ENCODE measurements at regions of chr12 and their contacts with region 1.

Region 1: DNA sequence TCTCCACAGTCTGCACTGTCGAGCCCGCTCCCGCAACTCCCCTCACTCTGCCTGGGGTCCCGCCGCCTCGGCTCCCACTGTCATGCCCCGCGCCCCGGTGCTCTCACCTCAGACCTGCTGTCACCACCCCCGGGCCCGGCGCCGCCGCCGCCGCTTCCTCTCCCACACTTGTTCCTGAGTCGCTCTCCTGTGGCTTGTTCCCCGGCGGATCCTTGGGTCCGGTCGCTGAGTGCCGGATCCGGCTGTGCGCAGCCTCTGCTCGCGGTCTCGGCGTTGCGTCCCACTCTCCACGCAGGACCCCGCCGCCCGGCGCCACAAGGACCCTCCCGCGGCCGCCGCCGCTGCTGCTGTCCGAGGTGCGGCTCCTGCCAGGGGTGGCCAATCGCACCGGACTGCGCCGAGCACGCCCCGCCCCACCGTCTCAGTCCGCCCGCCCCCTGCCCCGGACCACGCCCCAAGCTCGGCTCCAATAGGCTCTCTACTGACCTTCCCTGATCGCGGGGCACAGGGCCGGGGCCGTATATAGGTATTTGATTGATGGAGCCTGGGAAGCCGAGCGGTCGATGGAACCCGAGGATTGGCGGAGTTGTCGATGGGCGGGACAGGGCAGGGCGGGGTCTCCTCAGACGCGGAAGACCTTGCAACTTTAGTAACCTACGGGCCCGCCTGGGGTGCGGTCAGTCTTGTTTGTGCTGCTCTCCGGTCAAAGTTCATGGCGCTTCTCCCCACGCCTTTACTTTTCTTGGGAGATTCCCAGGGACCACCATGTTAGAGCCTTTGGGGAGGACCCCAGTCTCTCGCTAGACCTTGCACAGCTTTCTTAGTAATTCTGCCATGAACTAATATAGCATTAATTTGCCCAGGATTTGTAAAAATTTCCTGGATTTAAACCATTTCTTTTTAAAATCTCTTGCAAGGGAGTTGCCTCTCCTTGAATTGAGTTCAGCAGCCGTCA is at the start of gene TAOK3:
- DNase-seq: peak; percentile 96 to 98 (median 97)
- H3K4me3 ChIP-seq: peak within 1 kb of the TSS; percentile 81 to 87
- H3K4me3 Mint-ChIP-seq: peak within 1 kb of the TSS; percentile 89 to 93 (median 92)
- H3K27ac ChIP-seq: peak within 1 kb of the TSS; percentile 68
- H3K27ac Mint-ChIP-seq: peak within 1 kb of the TSS; percentile 93 to 100 (median 96)
- H3K4me1 ChIP-seq: peaks cover 46% of the 10 kb centered on the region
- H3K4me1 Mint-ChIP-seq: peaks cover 25 to 68% (median 45%) of the 10 kb centered on the region in 4 donors
- H3K27me3 ChIP-seq: no peaks in the 10 kb centered on the region
- H3K27me3 Mint-ChIP-seq: no peaks in the 10 kb centered on the region
- total RNA-seq, gene TAOK3: 74.8 to 76.0 TPM

Region 2: DNA sequence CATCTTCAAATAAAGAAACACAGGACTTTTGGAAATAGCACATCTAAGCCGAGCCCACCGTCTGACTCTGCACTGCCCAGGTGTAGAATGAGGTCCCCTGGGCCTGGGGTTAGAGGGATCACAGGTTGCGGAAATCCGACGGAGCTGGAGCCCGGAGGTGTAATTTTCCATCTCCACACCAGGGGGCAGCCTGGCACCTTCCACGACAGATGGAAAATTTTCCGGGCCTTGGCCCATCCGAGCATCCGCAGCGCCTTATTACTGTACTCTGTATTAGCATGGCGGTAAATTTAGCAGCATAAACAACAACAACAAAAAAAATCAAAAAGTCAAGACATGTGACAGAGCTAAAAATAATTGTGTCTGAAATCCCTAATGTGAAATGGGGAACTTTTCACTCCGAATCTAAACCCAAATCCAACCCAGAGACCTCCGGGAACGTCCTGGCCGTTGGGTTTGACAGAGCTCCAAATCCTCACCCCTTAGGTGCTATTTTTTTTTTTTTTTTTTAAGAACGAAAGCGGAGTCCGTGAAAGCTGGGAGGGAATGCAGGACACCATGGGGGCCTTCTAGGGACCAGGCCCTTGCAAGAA is 497.9 kb before region 1 on chr12:
- CTCF ChIA-PET with region 1: interaction called, 23 read pairs
- POLR2A ChIA-PET with region 1: interaction called, 3 read pairs
- intact Hi-C with region 1: loop called (anchors 2 kb)
- DNase-seq: peak; percentile 50 to 67 (median 62)
- H3K4me3 ChIP-seq: no peak overlapping the region
- H3K4me3 Mint-ChIP-seq: peak overlapping the region in 7 of 8 donors; percentile 27 to 77 (median 54)
- H3K27ac ChIP-seq: peak overlapping the region; percentile 21
- H3K27ac Mint-ChIP-seq: peak overlapping the region in 6 of 7 donors; percentile 59 to 93 (median 86)
- H3K4me1 ChIP-seq: peaks cover 6% of the 10 kb centered on the region
- H3K4me1 Mint-ChIP-seq: peaks cover 6 to 14% (median 10%) of the 10 kb centered on the region in 4 donors
- H3K27me3 ChIP-seq: no peaks in the 10 kb centered on the region
- H3K27me3 Mint-ChIP-seq: peaks cover 3 to 13% of the 10 kb centered on the region in 2 donors

Region 3: DNA sequence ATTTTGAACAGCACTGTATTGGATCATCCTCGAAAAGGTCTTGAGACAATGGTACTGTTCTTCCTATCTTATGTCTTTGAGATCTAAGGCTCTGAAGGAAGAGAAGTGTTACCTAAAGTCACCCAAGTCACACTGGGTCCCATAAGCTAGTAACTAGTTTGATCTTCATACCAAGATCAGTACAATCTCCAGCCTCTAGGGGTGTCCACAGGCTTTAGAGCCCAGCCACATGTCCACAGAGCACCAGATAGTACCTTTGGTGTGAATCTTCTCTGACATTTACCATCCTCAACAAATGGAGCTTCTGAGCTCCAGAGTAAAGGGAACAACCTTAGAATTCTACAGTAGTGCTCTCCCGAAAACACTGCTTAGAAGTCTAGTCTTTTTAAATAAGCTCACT is 482.7 kb before region 1 on chr12:
- CTCF ChIA-PET with region 1: no interaction called
- POLR2A ChIA-PET with region 1: no interaction called
- intact Hi-C with region 1: no loop called
- DNase-seq: no peak
- H3K4me3 ChIP-seq: no peak overlapping the region
- H3K4me3 Mint-ChIP-seq: no peak overlapping the region
- H3K27ac ChIP-seq: no peak overlapping the region
- H3K27ac Mint-ChIP-seq: peak overlapping the region in 1 of 7 donors; percentile 17
- H3K4me1 ChIP-seq: no peaks in the 10 kb centered on the region
- H3K4me1 Mint-ChIP-seq: no peaks in the 10 kb centered on the region
- H3K27me3 ChIP-seq: no peaks in the 10 kb centered on the region
- H3K27me3 Mint-ChIP-seq: peaks cover 1 to 11% of the 10 kb centered on the region in 2 donors

Region 4: DNA sequence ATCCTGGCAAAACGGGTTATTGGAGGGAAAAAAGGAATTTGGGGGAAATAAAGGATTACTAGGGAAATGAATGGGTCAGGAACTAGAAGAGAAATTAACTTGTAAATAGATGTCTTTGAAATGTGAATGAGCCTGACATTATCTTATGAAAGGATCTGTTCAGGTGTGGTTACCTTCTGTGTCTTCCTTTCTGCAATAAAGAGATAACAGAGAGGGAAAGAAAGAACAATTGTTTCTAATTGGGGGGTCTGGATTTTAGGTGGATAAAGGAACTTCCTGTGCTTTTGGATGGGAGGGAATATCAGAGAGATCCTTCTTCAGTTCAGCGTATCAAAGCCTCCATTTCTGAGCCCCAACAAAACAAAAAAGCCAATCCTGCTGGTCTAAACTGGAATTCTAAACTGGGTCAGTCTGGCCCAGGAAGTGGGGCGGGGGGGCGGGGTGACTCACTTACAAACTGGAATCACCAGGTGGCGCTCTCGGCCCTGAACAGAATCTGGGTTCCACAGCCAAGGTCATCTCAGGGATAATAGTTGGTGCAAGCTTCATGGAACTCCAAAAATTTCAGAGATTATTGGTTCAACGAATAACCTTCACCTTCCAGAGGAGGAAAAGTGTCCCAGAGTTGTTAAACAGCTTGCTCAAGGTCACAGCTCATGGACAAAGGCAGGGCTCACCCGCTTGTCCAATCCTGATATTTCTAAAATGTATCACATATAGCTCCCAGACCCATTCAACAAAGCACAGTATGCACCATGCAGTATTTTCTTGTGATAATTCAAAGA is 252.0 kb before region 1 on chr12:
- CTCF ChIA-PET with region 1: interaction called, 55 read pairs
- POLR2A ChIA-PET with region 1: interaction called, 17 read pairs
- intact Hi-C with region 1: loop called (anchors 1 kb)
- DNase-seq: peak; percentile 47 to 68 (median 59)
- H3K4me3 ChIP-seq: no peak overlapping the region
- H3K4me3 Mint-ChIP-seq: peak overlapping the region in 6 of 8 donors; percentile 5 to 70 (median 20)
- H3K27ac ChIP-seq: peak overlapping the region; percentile 47
- H3K27ac Mint-ChIP-seq: peak overlapping the region; percentile 76 to 96 (median 86)
- H3K4me1 ChIP-seq: peaks cover 10% of the 10 kb centered on the region
- H3K4me1 Mint-ChIP-seq: peaks cover 6 to 17% (median 11%) of the 10 kb centered on the region in 4 donors
- H3K27me3 ChIP-seq: no peaks in the 10 kb centered on the region
- H3K27me3 Mint-ChIP-seq: no peaks in the 10 kb centered on the region

Region 5: GRCh38 chr12:118183705-118184104 is 189.1 kb before region 1 on chr12:
- CTCF ChIA-PET with region 1: interaction called, 90 read pairs
- POLR2A ChIA-PET with region 1: interaction called, 25 read pairs
- intact Hi-C with region 1: loop called (anchors 1 kb)
- DNase-seq: no peak
- H3K4me3 ChIP-seq: no peak overlapping the region
- H3K4me3 Mint-ChIP-seq: no peak overlapping the region
- H3K27ac ChIP-seq: no peak overlapping the region
- H3K27ac Mint-ChIP-seq: no peak overlapping the region
- H3K4me1 ChIP-seq: peaks cover 4% of the 10 kb centered on the region
- H3K4me1 Mint-ChIP-seq: peaks cover 12 to 23% (median 14%) of the 10 kb centered on the region in 4 donors
- H3K27me3 ChIP-seq: no peaks in the 10 kb centered on the region
- H3K27me3 Mint-ChIP-seq: no peaks in the 10 kb centered on the region

Region 6: DNA sequence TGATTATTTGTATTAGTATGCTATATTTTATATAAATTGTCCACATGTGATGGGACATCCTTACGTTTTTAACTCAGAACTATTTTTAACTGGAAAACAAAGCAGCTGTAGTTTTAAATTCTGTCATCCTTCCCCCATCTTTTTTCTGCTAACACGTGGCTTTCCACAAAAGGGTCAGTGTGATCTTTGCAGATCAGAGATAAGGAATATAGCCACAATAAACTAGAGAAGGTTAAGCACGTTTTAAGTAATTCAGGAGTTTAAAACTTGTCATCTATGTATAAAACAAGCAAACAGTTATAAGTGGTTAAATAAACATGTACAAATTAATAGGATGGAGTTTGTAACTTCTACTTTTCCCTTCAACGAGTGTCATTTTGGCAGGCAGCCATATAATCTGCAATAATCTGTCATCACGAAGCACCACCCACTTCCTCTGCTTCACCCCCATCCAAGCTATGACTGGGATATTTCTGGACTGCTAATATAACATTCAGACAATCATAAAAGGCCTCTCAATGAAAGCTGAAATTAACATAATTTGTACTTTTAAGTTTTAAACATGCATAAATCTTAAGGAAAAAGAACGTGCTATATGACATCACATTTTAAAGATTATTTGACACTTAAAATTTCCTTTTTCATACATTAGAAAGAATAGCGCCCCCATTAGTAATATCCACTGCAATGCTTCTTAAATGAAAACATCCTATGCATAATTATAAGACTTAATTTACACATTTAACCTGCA is 15.4 kb before region 1 on chr12:
- CTCF ChIA-PET with region 1: interaction called, 119 read pairs
- POLR2A ChIA-PET with region 1: interaction called, 61 read pairs
- intact Hi-C with region 1: loop called (anchors 1 kb)
- DNase-seq: peak; percentile 60 to 78 (median 64)
- H3K4me3 ChIP-seq: peak overlapping the region; percentile 15 to 56
- H3K4me3 Mint-ChIP-seq: peak overlapping the region; percentile 63 to 94 (median 82)
- H3K27ac ChIP-seq: peak overlapping the region; percentile 28
- H3K27ac Mint-ChIP-seq: peak overlapping the region; percentile 74 to 93 (median 86)
- H3K4me1 ChIP-seq: peaks cover 41% of the 10 kb centered on the region
- H3K4me1 Mint-ChIP-seq: peaks cover 29 to 67% (median 49%) of the 10 kb centered on the region in 4 donors
- H3K27me3 ChIP-seq: no peaks in the 10 kb centered on the region
- H3K27me3 Mint-ChIP-seq: no peaks in the 10 kb centered on the region

Region 7: DNA sequence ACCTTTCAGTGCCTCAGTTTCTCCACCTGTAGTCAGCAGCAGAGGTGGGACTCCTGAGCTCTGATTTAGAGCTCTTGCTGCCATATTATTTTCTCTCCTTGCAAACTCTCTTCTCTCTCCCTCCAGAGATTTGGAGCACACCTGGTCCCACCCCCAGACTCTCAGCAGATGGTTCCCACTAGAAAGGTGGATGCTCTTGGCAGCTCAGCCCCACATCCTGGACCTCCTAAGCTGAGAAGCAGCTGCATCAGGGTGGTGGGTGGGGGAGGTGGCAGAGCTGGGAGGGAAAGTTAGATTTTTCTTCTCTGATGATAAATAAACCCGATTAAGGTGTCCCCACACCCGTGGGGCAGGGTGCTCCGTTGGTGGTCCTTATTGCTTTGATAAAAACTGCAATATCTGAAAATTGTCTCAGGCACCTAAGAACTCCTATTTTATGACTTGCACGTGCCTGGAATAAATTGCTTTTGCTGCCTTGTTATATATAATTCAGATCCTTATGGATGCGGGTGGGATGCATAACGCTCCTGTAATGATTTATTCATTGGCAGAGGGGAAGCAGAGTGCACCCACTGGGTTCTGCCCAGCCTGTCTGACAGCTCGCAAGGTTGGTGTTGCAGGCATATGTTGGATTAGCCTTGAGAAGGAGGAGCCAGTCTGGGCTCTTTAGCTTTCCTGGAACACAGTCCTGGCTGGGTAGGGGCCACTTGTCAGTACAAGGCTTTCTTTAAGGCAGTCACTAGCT is 217.8 kb after region 1 on chr12:
- CTCF ChIA-PET with region 1: no interaction called
- POLR2A ChIA-PET with region 1: no interaction called
- intact Hi-C with region 1: no loop called
- DNase-seq: no peak
- H3K4me3 ChIP-seq: no peak overlapping the region
- H3K4me3 Mint-ChIP-seq: no peak overlapping the region
- H3K27ac ChIP-seq: no peak overlapping the region
- H3K27ac Mint-ChIP-seq: no peak overlapping the region
- H3K4me1 ChIP-seq: no peaks in the 10 kb centered on the region
- H3K4me1 Mint-ChIP-seq: no peaks in the 10 kb centered on the region
- H3K27me3 ChIP-seq: no peaks in the 10 kb centered on the region
- H3K27me3 Mint-ChIP-seq: no peaks in the 10 kb centered on the region

Region 8: DNA sequence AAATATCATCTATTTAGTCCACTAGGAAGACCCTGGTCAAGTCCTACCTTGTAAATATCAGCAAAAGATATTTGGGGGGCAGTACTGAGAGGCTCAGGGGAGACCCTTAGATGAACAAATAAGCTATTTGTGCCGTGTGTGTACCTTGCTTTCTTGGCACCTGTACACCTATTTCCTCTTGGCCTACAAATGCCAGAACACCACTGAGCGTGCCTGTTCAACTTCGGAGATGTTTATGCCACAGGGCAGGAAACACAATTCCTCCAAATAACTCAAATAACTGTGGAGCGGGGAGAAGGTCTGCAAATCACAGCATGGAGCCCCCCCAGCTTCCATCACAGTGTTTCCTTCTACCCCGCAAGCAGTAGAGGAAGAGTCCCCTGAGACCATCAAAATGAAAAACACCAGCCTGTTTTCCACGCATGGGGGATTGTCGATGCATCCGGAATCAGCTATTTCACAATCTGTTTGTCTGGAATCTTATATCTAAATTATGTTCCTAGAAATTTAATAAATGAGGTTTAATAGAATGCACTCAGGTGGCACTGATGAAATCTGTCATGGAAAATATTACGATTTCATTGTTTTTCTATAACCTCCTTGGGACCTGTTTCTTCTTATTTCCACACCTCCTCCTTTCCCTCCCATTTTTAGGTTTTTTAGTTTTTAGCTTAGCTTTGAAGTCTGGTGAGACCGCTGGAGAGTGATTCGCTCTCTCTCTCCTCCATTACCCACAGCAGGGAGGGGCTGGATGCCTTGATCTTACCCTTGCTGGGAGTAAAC is 354.6 kb after region 1 on chr12:
- CTCF ChIA-PET with region 1: no interaction called
- POLR2A ChIA-PET with region 1: no interaction called
- intact Hi-C with region 1: no loop called
- DNase-seq: no peak
- H3K4me3 ChIP-seq: no peak overlapping the region
- H3K4me3 Mint-ChIP-seq: no peak overlapping the region
- H3K27ac ChIP-seq: no peak overlapping the region
- H3K27ac Mint-ChIP-seq: no peak overlapping the region
- H3K4me1 ChIP-seq: no peaks in the 10 kb centered on the region
- H3K4me1 Mint-ChIP-seq: no peaks in the 10 kb centered on the region
- H3K27me3 ChIP-seq: no peaks in the 10 kb centered on the region
- H3K27me3 Mint-ChIP-seq: no peaks in the 10 kb centered on the region

Region 9: DNA sequence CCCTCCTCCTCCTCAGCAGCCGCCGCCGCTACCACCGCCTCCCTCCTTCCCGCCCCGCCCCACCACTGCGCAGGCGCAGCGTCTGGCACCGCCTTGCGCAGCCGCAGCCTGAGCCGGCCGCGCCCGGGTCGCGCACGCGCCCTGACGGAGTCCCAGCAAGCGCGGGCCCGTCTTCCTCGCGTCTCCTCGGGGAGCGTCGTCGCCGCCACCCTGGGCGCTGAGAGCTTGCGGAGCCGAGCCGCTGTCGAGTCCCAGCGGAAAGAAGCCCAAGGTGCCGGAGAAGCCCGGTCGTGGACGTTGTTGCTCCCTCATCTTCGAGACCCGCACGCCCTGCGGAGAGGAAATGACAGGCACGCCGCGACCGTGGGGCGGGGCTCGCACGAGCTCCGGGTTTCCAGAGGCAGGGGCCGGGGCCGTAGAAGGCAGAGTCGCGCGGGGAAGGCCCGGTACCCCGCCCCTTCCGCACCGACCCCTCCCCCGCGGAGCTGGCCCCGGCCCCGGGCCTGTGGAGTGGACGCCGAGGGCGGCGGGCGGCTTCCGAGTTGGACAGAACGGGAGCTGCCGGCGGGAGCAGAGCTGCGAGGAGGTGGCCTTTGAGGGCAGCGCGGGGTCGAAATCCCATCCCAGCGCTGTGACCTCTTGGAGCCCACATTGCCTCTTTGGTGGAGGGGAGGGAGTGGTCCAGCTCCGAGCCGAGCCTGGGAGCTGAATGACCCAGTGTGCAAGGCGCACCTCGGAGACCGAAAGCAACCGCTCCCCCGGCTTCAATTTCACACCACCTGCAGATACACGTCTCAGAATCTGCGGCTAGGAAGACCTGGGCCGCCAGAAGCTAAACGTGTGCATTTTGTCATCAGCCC is 1744.2 kb after region 1 on chr12:
- CTCF ChIA-PET with region 1: no interaction called
- POLR2A ChIA-PET with region 1: no interaction called
- intact Hi-C with region 1: loop called (anchors 5 kb)
- DNase-seq: peak; percentile 95 to 99 (median 97)
- H3K4me3 ChIP-seq: peak overlapping the region; percentile 75 to 80
- H3K4me3 Mint-ChIP-seq: peak overlapping the region; percentile 86 to 98 (median 90)
- H3K27ac ChIP-seq: peak overlapping the region; percentile 83
- H3K27ac Mint-ChIP-seq: peak overlapping the region; percentile 85 to 99 (median 94)
- H3K4me1 ChIP-seq: peaks cover 84% of the 10 kb centered on the region
- H3K4me1 Mint-ChIP-seq: peaks cover 59 to 88% (median 76%) of the 10 kb centered on the region in 4 donors
- H3K27me3 ChIP-seq: no peaks in the 10 kb centered on the region
- H3K27me3 Mint-ChIP-seq: no peaks in the 10 kb centered on the region